ENCODE measurements at regions of chr1 and their contacts with region 1.

Region 1: GRCh38 chr1:34597877-34598514 is 156.9 kb upstream of the GJB5 start:
- DNase-seq: peak; percentile 46 to 92 (median 78)
- ATAC-seq: peak in 3 of 4 donors; percentile 86 to 97 (median 88)
- H3K4me3 ChIP-seq: no peak overlapping the region
- H3K27ac ChIP-seq: no peak overlapping the region
- H3K4me1 ChIP-seq: no peaks in the 10 kb centered on the region
- H3K27me3 ChIP-seq: no peaks in the 10 kb centered on the region
- CTCF ChIP-seq: peak; percentile 67 to 81 (median 78)

Region 2: GRCh38 chr1:33641104-33641830 is 956.7 kb before region 1 on chr1:
- intact Hi-C with region 1: loop called in 1 of 3 experiments (anchors 10 kb)
- DNase-seq: no peak
- ATAC-seq: peak in 3 of 4 donors; percentile 57 to 81 (median 60)
- H3K4me3 ChIP-seq: no peak overlapping the region
- H3K27ac ChIP-seq: no peak overlapping the region
- H3K4me1 ChIP-seq: no peaks in the 10 kb centered on the region
- H3K27me3 ChIP-seq: no peaks in the 10 kb centered on the region
- CTCF ChIP-seq: peak in 2 of 4 donors; percentile 7 to 19

Region 3: DNA sequence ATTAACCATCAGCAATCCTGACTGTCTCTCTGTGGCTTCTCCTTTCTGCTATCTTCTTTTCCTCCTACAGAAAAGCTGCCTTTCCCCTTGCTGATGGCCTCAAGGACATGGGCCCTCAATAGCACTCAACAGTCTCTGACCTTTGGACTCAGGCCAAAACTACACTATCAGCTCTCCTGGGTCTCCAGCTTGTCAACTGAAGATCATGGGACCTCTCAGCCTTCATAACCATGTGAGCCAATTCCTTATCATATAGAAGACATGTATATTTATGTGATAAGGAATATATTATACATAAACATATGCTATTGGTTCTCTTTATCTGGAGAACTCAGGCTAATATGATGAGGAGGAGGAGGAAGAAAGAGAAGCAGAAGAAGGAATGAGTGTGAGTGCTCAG is 65.0 kb after region 1 on chr1:
- intact Hi-C with region 1: no loop called
- DNase-seq: no peak
- ATAC-seq: no peak
- H3K4me3 ChIP-seq: no peak overlapping the region
- H3K27ac ChIP-seq: no peak overlapping the region
- H3K4me1 ChIP-seq: no peaks in the 10 kb centered on the region
- H3K27me3 ChIP-seq: no peaks in the 10 kb centered on the region
- CTCF ChIP-seq: no peak